Activated CD4-positive, alpha-beta T cell treated with anti-CD3 and anti-CD28 coated beads for 36 hours (primary cell): ENCODE measurements at regions of chr17 and their contacts with region 1.

Region 1: GRCh38 chr17:3845621-3846441 is at the start of gene NCBP3:
- DNase-seq: peak; percentile 96
- ATAC-seq: peak; percentile 93
- H3K4me3 Mint-ChIP-seq: peak within 1 kb of the TSS; percentile 84
- H3K27ac Mint-ChIP-seq: peak within 1 kb of the TSS; percentile 91
- H3K4me1 Mint-ChIP-seq: peaks cover 19% of the 10 kb centered on the region
- H3K27me3 Mint-ChIP-seq: no peaks in the 10 kb centered on the region
- total RNA-seq, gene NCBP3: 35.9 to 44.6 TPM

Region 2: DNA sequence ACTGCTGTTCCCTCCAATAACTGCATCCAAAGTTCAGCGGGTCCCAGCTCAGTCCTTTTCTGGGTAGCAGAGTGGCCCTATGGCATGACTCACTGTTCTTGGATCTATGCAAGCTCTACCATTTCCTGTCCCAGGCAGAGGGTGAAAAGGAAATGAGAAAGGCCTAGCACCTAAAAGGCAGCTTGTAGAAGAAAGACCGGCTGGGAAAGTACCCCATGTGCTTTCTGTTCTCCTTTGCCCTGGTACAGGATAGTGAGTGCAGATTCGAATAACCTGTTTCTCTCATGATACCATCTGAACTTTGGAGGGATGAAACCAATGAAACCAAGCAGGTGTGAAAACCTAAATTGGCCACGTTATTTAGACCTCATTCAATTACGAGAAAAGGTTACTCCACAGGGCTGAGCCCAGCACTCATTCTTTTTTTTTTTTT is 134.9 kb before region 1 on chr17:
- CTCF ChIA-PET with region 1: no interaction called
- POLR2A ChIA-PET with region 1: interaction called, 4 read pairs
- intact Hi-C with region 1: loop called in 1 of 2 experiments (anchors 1 kb)
- DNase-seq: peak; percentile 82
- ATAC-seq: peak; percentile 98
- H3K4me3 Mint-ChIP-seq: peak overlapping the region; percentile 55
- H3K27ac Mint-ChIP-seq: peak overlapping the region; percentile 83
- H3K4me1 Mint-ChIP-seq: peaks cover 55% of the 10 kb centered on the region
- H3K27me3 Mint-ChIP-seq: no peaks in the 10 kb centered on the region

Region 3: GRCh38 chr17:3761036-3761917 is 84.6 kb before region 1 on chr17:
- CTCF ChIA-PET with region 1: interaction called, 3 read pairs
- POLR2A ChIA-PET with region 1: no interaction called
- intact Hi-C with region 1: loop called in 1 of 2 experiments (anchors 1 kb)
- DNase-seq: no peak
- ATAC-seq: no peak
- H3K4me3 Mint-ChIP-seq: no peak overlapping the region
- H3K27ac Mint-ChIP-seq: no peak overlapping the region
- H3K4me1 Mint-ChIP-seq: peaks cover 33% of the 10 kb centered on the region
- H3K27me3 Mint-ChIP-seq: no peaks in the 10 kb centered on the region

Region 4: DNA sequence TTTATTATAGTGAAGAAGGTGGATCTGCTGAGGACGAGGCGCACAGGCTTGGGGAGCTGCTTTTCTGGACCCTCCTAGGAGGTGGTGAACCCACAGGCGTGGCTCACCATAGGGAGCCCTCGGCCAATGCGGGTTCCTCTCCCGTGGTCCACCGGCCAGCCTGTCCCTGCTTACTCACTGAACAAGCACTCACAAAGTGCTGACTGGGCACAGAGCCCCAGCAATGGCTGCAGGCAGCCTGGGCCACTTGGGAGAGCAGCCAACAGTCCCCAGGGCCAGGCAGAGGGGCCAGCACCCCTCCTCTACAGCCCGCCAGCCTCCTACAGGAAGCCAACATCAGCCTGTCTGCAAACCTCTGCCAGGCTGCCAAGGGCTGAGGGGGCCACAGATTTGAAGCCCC is 19.3 kb after region 1 on chr17:
- CTCF ChIA-PET with region 1: interaction called, 16 read pairs
- POLR2A ChIA-PET with region 1: no interaction called
- intact Hi-C with region 1: no loop called
- DNase-seq: no peak
- ATAC-seq: no peak
- H3K4me3 Mint-ChIP-seq: no peak overlapping the region
- H3K27ac Mint-ChIP-seq: no peak overlapping the region
- H3K4me1 Mint-ChIP-seq: no peaks in the 10 kb centered on the region
- H3K27me3 Mint-ChIP-seq: no peaks in the 10 kb centered on the region

Region 5: GRCh38 chr17:3877220-3877619 is 31.4 kb after region 1 on chr17:
- CTCF ChIA-PET with region 1: no interaction called
- POLR2A ChIA-PET with region 1: no interaction called
- intact Hi-C with region 1: no loop called
- DNase-seq: no peak
- ATAC-seq: no peak
- H3K4me3 Mint-ChIP-seq: no peak overlapping the region
- H3K27ac Mint-ChIP-seq: no peak overlapping the region
- H3K4me1 Mint-ChIP-seq: no peaks in the 10 kb centered on the region
- H3K27me3 Mint-ChIP-seq: no peaks in the 10 kb centered on the region

Region 6: GRCh38 chr17:3913531-3914311 is 67.9 kb after region 1 on chr17:
- CTCF ChIA-PET with region 1: interaction called, 4 read pairs
- POLR2A ChIA-PET with region 1: no interaction called
- intact Hi-C with region 1: loop called in 1 of 2 experiments (anchors 1 kb)
- DNase-seq: peak; percentile 92
- ATAC-seq: peak; percentile 71
- H3K4me3 Mint-ChIP-seq: no peak overlapping the region
- H3K27ac Mint-ChIP-seq: peak overlapping the region; percentile 42
- H3K4me1 Mint-ChIP-seq: peaks cover 52% of the 10 kb centered on the region
- H3K27me3 Mint-ChIP-seq: no peaks in the 10 kb centered on the region

Region 7: DNA sequence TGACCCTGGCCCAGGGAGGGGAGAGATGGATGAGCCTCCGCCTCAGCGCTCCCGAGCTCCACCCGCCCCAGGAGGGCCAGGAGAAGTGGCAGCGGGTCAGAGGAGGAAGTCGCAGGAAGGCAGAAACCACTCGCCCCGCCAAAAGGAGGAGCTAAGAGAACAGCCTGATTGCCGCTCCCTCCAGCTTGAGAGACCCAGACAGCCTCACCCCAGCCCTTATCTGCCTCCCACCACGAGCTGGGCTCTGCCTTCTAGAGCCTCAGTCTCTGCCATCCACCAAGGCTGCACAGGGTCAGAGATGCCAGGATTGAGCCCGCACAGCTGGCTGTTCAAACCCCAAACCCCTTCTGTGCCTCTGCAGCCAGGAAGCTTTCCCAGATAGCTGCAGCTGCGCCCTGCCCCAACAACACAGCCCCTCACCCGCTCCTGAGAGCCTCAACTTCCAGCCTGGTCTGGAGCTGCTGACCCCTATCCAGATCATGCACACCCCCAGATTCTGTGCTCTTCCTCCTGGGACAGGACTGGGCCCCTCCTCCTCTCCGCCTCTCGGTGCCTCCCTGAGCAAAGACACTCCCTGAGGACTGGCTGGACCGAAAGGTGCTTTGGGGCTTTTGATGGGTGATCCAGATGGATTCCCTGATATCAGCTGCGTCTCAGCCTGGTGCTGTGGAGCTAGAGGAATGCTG is 119.4 kb after region 1 on chr17:
- CTCF ChIA-PET with region 1: interaction called, 5 read pairs
- POLR2A ChIA-PET with region 1: interaction called, 4 read pairs
- intact Hi-C with region 1: loop called in 1 of 2 experiments (anchors 1 kb)
- DNase-seq: peak; percentile 86
- ATAC-seq: peak; percentile 75
- H3K4me3 Mint-ChIP-seq: peak overlapping the region; percentile 81
- H3K27ac Mint-ChIP-seq: peak overlapping the region; percentile 93
- H3K4me1 Mint-ChIP-seq: peaks cover 40% of the 10 kb centered on the region
- H3K27me3 Mint-ChIP-seq: no peaks in the 10 kb centered on the region